Aorta (tissue), 5 donors: ENCODE measurements at regions of chr9 and their contacts with region 1.

Region 1: DNA sequence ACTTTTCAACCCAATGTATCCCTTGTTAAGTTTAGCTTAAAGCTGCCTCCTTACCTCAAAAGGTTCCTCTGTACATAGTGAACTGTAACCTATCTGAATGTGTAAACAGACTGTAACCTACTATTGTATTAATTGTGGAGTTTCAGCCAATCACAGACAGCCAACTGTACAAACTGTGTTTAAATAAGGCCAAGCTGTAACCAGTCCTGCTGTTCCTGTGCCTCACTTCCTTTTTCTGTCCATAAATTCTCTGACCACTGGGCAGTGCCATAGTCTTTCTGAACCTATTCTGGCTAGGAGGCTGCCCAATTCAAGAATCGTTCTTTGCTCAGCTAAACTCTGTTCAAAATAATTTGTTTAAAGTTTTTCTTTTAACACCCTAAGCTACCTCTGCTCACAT is 74.7 kb upstream of the DAPK1 start:
- DNase-seq: no peak
- ATAC-seq: no peak
- H3K4me3 ChIP-seq: no peak overlapping the region
- H3K27ac ChIP-seq: no peak overlapping the region
- H3K4me1 ChIP-seq: no peaks in the 10 kb centered on the region
- H3K27me3 ChIP-seq: no peaks in the 10 kb centered on the region

Region 2: DNA sequence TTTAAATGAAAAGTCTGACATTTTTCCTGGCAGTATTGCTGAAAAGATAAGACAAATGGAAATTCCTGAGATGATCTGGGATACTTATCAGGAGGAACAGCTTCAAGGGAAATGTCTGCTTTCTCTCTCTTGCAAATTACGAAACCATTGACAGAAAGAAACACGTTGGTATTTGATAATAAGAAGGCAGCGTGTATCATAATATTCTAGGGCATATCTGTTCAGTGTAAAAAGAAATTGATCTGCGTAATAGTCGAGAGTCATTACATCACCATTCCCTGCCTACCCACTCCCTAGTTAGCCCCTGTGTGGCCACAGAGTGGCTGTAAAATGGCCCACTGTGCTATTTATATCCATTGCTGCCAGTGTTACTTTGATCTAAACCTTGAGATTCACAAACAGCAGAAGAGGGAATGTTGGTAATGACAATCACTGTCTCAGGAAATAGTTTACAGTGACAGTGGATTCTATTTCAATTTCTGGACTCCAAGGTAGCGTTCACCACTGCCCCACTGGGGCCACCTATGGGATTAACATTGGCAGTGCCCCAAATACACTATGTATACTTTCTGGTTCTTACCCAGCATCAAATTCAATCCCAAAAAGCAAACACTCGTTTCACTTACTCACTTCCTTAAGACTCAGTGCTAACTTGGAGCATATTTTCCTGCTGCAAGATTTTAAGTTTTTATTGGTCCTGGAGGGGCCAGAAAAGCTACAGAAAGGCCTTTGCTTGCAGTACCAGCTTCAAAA is 342.3 kb before region 1 on chr9:
- intact Hi-C with region 1: no loop called
- DNase-seq: no peak
- ATAC-seq: no peak
- H3K4me3 ChIP-seq: no peak overlapping the region
- H3K27ac ChIP-seq: no peak overlapping the region
- H3K4me1 ChIP-seq: peaks cover 0 to 5% of the 10 kb centered on the region in 2 donors
- H3K27me3 ChIP-seq: no peaks in the 10 kb centered on the region

Region 3: GRCh38 chr9:87479801-87480201 is 56.8 kb after region 1 on chr9:
- intact Hi-C with region 1: loop called in 1 of 2 experiments (anchors 10 kb)
- DNase-seq: peak in 1 of 2 donors; percentile 74
- ATAC-seq: peak; percentile 36
- H3K4me3 ChIP-seq: no peak overlapping the region
- H3K27ac ChIP-seq: no peak overlapping the region
- H3K4me1 ChIP-seq: no peaks in the 10 kb centered on the region
- H3K27me3 ChIP-seq: no peaks in the 10 kb centered on the region